ENCODE measurements at regions of chr17 and their contacts with region 1.

Region 1: GRCh38 chr17:77542551-77543490 is 402.1 kb downstream of the SEC14L1 start:
- DNase-seq: peak; percentile 45 to 80 (median 56)
- ATAC-seq: peak; percentile 93
- H3K4me3 ChIP-seq: no peak overlapping the region
- H3K4me3 Mint-ChIP-seq: no peak overlapping the region
- H3K27ac ChIP-seq: no peak overlapping the region
- H3K27ac Mint-ChIP-seq: no peak overlapping the region
- H3K4me1 ChIP-seq: peaks cover 6% of the 10 kb centered on the region
- H3K4me1 Mint-ChIP-seq: no peaks in the 10 kb centered on the region
- H3K27me3 ChIP-seq: no peaks in the 10 kb centered on the region
- H3K27me3 Mint-ChIP-seq: peaks cover 7% of the 10 kb centered on the region
- CTCF ChIP-seq: peak; percentile 88

Region 2: GRCh38 chr17:77741109-77741508 is 198.3 kb after region 1 on chr17:
- CTCF ChIA-PET with region 1: interaction called, 3 read pairs
- POLR2A ChIA-PET with region 1: no interaction called
- intact Hi-C with region 1: loop called (anchors 2 kb)
- DNase-seq: peak in 12 of 14 experiments; percentile 11 to 69 (median 28)
- ATAC-seq: peak; percentile 37
- H3K4me3 ChIP-seq: no peak overlapping the region
- H3K4me3 Mint-ChIP-seq: no peak overlapping the region
- H3K27ac ChIP-seq: no peak overlapping the region
- H3K27ac Mint-ChIP-seq: no peak overlapping the region
- H3K4me1 ChIP-seq: no peaks in the 10 kb centered on the region
- H3K4me1 Mint-ChIP-seq: no peaks in the 10 kb centered on the region
- H3K27me3 ChIP-seq: peaks cover 0 to 4% of the 10 kb centered on the region in 2 experiments
- H3K27me3 Mint-ChIP-seq: no peaks in the 10 kb centered on the region
- CTCF ChIP-seq: peak; percentile 60

Region 3: DNA sequence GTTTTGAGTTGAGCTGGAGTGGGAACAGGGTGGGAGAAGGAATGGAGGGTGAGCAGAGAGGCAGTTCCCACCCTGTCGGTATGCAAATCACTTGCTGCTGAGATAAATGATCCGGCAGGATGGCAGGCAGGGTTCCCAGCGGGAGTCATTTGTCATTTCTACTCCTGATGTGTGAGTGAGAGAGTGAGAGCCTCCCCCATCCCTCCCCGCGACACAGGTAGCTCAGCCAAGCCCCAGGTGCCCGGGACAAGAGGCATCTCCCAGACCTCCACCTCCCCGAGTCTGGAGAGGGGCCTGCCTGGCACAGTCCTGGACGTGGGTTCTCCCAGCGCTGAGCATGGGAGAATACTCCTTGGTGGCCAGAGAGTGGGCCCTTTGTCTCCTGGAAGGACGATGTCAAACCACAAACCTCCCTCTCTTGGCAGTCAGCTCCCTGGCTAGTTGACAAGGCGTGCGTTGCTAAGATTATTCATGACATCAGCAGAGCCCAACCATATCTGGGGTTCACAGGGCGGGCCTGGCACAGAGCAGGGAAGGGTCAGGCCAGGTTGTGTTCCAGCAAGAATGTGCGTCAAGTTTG is 382.0 kb after region 1 on chr17:
- CTCF ChIA-PET with region 1: no interaction called
- POLR2A ChIA-PET with region 1: no interaction called
- intact Hi-C with region 1: loop called in 1 of 2 experiments (anchors 10 kb)
- DNase-seq: no peak
- ATAC-seq: no peak
- H3K4me3 ChIP-seq: no peak overlapping the region
- H3K4me3 Mint-ChIP-seq: no peak overlapping the region
- H3K27ac ChIP-seq: no peak overlapping the region
- H3K27ac Mint-ChIP-seq: no peak overlapping the region
- H3K4me1 ChIP-seq: peaks cover 18% of the 10 kb centered on the region
- H3K4me1 Mint-ChIP-seq: peaks cover 30% of the 10 kb centered on the region
- H3K27me3 ChIP-seq: no peaks in the 10 kb centered on the region
- H3K27me3 Mint-ChIP-seq: peaks cover 1% of the 10 kb centered on the region
- CTCF ChIP-seq: no peak